Activated T-helper 1 cell treated with anti-CD3 and anti-CD28 coated beads, Interleukin-12 subunit alpha, Interleukin-12 subunit beta, Interleukin-2, Interleukin-4 antibody, amounts not matched to agents 30 ng/mL and 10 ng/mL and 1 ng/mL, durations not matched to agents 14 hours and 24 hours and 36 hours (primary cell): ENCODE measurements at regions of chr14 and their contacts with region 1.

Region 1: GRCh38 chr14:81533536-81534343 is at the start of gene SEL1L:
- DNase-seq: peak; percentile 99
- H3K4me3 Mint-ChIP-seq: peak within 1 kb of the TSS; percentile 95
- H3K27ac Mint-ChIP-seq: peak within 1 kb of the TSS; percentile 59
- H3K4me1 Mint-ChIP-seq: peaks cover 41% of the 10 kb centered on the region
- H3K27me3 Mint-ChIP-seq: peaks cover 6% of the 10 kb centered on the region
- total RNA-seq, gene SEL1L: 55.9 and 56.1 TPM in 2 replicates

Region 2: DNA sequence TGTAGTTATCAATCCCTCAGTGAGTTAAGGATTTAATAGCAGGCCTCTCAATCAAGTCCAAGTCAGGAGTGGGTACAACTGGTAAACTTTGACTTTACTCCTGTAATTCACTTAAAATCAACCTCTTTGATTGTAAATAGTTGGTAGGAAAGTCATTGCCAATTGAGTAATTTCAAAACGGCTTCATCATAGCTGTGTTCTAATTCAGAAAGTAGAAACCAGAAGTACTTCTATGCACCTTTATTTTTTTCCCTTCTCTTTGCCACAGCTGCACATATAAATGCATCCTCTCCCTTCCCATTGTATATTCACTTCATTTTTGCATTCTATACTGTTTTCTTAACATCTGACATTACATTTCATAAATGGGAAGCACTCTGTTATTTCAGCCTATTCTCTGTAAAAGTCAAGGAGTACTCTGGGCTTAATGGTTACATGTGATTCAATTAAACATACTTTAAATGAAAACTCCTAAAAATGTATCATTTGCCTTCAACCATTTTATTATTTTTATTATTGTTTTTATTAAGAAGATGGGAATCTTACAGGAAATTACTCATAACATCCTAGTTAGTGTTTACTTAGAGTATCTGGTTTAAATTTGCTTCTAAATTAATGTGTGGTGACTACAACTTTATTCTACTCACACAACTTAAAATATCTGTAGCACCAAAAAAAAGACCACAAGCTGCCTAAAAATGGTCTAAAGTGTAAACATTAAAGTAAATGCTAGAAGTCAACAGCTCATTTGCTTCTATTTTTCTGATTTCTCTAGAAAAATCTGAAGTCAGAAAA is 763.4 kb before region 1 on chr14:
- intact Hi-C with region 1: no loop called
- DNase-seq: no peak
- H3K4me3 Mint-ChIP-seq: no peak overlapping the region
- H3K27ac Mint-ChIP-seq: no peak overlapping the region
- H3K4me1 Mint-ChIP-seq: no peaks in the 10 kb centered on the region
- H3K27me3 Mint-ChIP-seq: no peaks in the 10 kb centered on the region

Region 3: DNA sequence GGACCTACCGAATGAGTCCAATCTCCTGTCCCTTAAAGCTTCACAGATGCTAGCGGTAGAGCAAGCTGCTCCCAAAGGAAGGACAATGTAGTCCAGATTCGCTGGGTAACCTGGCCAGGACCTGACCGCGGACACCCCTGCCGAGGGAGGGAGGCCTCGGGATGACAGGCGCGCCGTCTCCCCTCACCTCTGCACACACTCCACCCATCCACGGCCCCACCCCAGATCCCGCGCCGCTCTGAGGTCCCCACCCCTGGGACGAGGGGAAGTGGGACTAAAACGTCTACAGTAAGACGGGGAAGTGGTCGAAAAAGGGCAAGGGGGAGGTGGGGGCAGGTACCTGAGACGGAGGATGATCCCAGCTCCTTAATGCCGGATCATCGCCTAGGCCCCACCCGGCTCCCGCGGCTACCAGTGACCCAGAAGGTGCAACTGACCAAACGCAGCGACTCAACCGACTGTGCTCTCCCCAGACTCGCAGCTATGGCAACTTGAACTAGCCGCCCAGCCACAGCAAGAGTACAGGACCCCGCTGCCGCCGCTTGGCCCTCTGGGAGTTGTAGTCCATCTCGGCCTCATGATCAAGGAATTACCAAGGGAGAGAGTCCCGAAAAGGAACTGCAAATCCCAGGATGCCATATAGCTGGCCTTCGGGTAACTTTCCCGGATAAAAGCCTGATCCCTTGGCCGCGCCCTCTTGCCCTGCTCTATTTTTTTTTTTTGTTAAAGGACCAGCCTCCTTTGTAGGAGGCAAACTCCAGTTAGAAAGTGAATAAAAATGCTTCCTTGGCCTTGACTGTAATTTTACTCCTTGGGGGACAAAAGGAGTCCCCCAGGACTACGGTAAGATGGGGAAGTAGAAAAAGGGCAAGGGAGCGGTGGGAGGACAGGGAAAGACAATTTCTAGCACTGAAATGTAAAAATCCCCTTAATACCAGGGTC is 592.2 kb before region 1 on chr14 and contains the start of gene CEP128:
- intact Hi-C with region 1: loop called (anchors 1 kb)
- DNase-seq: peak; percentile 79
- H3K4me3 Mint-ChIP-seq: peak within 1 kb of the TSS; percentile 88
- H3K27ac Mint-ChIP-seq: peak within 1 kb of the TSS; percentile 88
- H3K4me1 Mint-ChIP-seq: peaks cover 30% of the 10 kb centered on the region
- H3K27me3 Mint-ChIP-seq: no peaks in the 10 kb centered on the region
- total RNA-seq, gene CEP128: 18.2 and 22.0 TPM in 2 replicates

Region 4: GRCh38 chr14:81464247-81465002 is 69.3 kb before region 1 on chr14:
- intact Hi-C with region 1: loop called (anchors 2 kb)
- DNase-seq: peak; percentile 57
- H3K4me3 Mint-ChIP-seq: peak overlapping the region; percentile 77
- H3K27ac Mint-ChIP-seq: peak overlapping the region; percentile 63
- H3K4me1 Mint-ChIP-seq: peaks cover 12% of the 10 kb centered on the region
- H3K27me3 Mint-ChIP-seq: no peaks in the 10 kb centered on the region

Region 5: GRCh38 chr14:81474148-81474492 is 59.6 kb before region 1 on chr14:
- intact Hi-C with region 1: loop called (anchors 1 kb)
- DNase-seq: no peak
- H3K4me3 Mint-ChIP-seq: peak overlapping the region; percentile 27
- H3K27ac Mint-ChIP-seq: peak overlapping the region; percentile 53
- H3K4me1 Mint-ChIP-seq: peaks cover 52% of the 10 kb centered on the region
- H3K27me3 Mint-ChIP-seq: no peaks in the 10 kb centered on the region

Region 6: GRCh38 chr14:81504864-81505263 is 28.9 kb before region 1 on chr14:
- intact Hi-C with region 1: no loop called
- DNase-seq: no peak
- H3K4me3 Mint-ChIP-seq: no peak overlapping the region
- H3K27ac Mint-ChIP-seq: no peak overlapping the region
- H3K4me1 Mint-ChIP-seq: peaks cover 16% of the 10 kb centered on the region
- H3K27me3 Mint-ChIP-seq: no peaks in the 10 kb centered on the region

Region 7: DNA sequence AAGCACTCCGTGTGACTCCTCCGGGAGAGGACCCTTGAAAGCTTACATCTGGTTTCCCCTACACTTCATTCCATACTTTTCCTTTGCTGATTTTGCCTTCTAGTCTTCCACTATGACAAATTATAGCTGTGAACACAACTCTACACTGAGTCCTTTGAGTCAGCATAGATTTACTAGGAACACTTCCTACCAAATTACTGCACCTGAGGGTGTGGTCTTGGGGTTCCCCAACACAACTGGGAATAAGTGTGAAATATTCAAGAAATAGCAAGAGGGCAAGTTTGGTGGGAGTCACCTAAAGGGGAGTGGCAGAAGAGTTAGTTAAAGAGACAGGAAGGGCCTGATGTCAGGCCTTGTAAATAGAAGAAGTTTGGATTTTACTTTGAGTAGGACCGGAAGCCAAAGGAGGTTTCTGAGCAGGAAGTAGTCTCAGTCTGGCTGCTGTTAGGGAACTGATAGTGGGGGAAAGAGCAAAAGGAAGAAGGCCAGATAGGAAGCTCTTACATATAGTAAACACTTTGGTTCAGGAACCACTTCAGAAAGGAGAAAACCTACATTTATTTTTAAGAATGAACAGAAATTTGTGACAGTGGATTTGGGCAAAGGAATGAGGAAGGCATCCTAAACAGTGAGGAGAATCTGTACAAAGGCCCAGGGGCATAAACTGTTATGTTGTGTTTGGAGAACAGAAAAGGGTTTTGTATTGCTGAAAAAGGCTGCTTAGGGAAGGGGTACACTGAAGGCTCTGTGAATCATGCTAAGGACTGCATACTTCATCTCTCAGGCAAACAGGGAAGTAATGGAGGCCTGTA is 14.3 kb before region 1 on chr14:
- intact Hi-C with region 1: loop called (anchors 1 kb)
- DNase-seq: no peak
- H3K4me3 Mint-ChIP-seq: peak overlapping the region; percentile 50
- H3K27ac Mint-ChIP-seq: peak overlapping the region; percentile 88
- H3K4me1 Mint-ChIP-seq: peaks cover 45% of the 10 kb centered on the region
- H3K27me3 Mint-ChIP-seq: no peaks in the 10 kb centered on the region

Region 8: DNA sequence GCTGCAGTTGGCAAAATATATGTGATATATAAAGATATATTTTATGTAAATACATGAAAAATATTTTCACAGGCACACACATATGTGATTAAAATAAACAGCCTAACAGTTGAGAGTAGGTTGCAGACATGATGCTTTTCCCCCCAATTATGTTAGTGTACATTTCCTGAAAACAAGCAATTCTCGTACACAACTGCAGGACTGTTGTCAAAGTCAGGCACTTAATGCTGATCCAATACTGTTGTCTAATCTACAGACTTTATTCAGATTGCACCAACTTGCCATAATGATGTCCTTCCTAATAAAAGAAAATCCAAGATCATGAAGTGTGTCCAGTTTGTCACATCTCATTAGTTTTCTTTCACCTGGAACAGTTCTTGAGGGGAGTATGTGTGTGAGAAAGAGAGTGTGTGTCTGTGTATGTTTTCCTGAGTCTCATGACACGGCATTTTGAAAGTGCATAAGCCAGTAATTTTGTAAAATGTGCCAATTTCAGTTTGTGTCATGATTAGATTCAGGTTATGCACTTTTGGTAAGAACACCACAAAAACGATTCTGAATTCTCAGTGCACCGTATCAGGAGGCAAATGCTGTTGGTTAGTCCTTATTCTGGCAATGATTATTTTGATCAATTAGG is 16.4 kb after region 1 on chr14:
- intact Hi-C with region 1: loop called (anchors 1 kb)
- DNase-seq: no peak
- H3K4me3 Mint-ChIP-seq: no peak overlapping the region
- H3K27ac Mint-ChIP-seq: peak overlapping the region; percentile 27
- H3K4me1 Mint-ChIP-seq: peaks cover 25% of the 10 kb centered on the region
- H3K27me3 Mint-ChIP-seq: peaks cover 1% of the 10 kb centered on the region